ENCODE measurements at regions of chr3 and their contacts with region 1.

Region 1: DNA sequence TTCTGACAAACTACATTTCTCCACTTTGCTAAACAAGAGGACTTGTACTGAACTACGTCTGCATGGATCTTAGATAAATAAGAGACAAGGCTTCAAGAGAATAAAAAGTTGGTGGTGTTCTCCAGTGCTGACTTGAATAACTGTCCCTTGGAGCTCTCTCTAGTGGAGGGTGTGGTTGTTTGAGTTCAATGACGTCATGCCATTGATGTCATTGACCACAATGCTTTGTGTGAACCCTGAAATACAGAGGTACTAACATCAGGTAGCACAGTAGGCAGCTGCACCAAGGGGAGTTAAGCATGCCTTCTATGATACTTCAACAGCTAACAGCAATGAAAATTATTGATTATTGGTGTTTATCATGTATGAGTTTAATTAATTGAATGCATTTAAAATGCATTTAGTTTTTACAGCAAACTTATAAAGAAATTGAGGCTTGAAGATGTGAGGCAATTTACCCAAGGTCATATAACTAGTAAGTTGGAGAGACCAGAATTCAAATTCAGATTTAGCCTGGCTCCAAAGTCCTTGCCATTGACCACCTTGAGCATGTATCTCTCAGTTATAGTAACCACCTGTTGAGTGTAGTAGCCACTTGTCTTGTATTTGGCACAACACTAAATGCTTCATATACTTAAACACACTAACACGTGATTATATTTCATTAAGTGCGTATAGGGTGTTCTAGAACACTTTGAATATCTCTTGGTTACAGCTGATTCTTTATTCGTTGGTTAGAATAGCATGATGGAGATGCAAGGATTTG is 126.0 kb upstream of the ANKRD28 start:
- DNase-seq: no peak
- ATAC-seq: no peak
- H3K4me3 ChIP-seq: no peak overlapping the region
- H3K27ac ChIP-seq: no peak overlapping the region
- H3K4me1 ChIP-seq: no peaks in the 10 kb centered on the region
- H3K27me3 ChIP-seq: no peaks in the 10 kb centered on the region
- CTCF ChIP-seq: no peak
- POLR2A ChIP-seq: no peak

Region 2: DNA sequence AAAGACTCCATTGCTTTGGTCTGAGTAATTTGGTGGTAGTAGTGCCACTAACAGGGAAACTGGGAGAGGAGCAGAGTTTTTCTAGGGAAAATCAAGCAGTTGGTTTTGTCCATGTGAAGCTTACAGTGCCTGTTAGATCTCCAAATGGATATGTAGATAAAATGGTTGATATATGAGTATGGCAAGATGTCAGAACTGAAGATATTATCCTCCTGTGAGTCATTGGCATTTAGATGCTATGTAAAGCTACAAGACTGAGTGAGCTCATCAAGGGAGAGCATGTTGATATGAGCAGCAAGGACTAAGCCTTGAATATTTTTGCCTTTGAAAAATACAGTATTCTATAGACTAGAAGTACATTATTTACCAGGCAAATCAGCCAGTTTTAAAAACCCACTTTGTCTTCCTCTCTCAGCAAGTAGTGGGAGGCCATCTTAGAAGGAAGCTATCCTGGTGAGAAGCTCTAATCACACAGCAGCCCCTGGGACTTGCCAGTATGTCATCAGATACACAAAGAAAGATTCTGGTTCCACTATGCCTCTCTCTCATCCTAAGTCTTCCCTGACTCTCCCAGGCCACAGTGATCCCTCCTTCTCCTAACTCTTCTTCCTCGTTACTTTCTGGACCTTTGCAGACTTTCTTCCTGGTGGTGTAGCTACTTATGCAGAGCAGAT is 48.7 kb before region 1 on chr3:
- intact Hi-C with region 1: loop called in 1 of 10 experiments (anchors 10 kb)
- DNase-seq: no peak
- ATAC-seq: no peak
- H3K4me3 ChIP-seq: no peak overlapping the region
- H3K27ac ChIP-seq: no peak overlapping the region
- H3K4me1 ChIP-seq: no peaks in the 10 kb centered on the region
- H3K27me3 ChIP-seq: no peaks in the 10 kb centered on the region
- CTCF ChIP-seq: no peak
- POLR2A ChIP-seq: no peak

Region 3: GRCh38 chr3:15982667-15983145 is 58.9 kb after region 1 on chr3:
- intact Hi-C with region 1: loop called in 1 of 10 experiments (anchors 10 kb)
- DNase-seq: peak in 4 of 5 donors; percentile 25 to 53 (median 39)
- ATAC-seq: peak; percentile 81 to 93 (median 88)
- H3K4me3 ChIP-seq: peak overlapping the region in 8 of 12 donors; percentile 2 to 42 (median 30)
- H3K27ac ChIP-seq: peak overlapping the region in 9 of 12 donors; percentile 27 to 60 (median 49)
- H3K4me1 ChIP-seq: peaks cover 0 to 7% (median 0%) of the 10 kb centered on the region in 12 donors
- H3K27me3 ChIP-seq: no peaks in the 10 kb centered on the region
- CTCF ChIP-seq: no peak
- POLR2A ChIP-seq: no peak

Region 4: GRCh38 chr3:16028604-16029003 is 104.8 kb after region 1 on chr3:
- intact Hi-C with region 1: no loop called
- DNase-seq: no peak
- ATAC-seq: no peak
- H3K4me3 ChIP-seq: no peak overlapping the region
- H3K27ac ChIP-seq: no peak overlapping the region
- H3K4me1 ChIP-seq: no peaks in the 10 kb centered on the region
- H3K27me3 ChIP-seq: no peaks in the 10 kb centered on the region
- CTCF ChIP-seq: no peak
- POLR2A ChIP-seq: no peak

Measured in heart left ventricle (tissue), 16 donors.